ENCODE measurements at regions of chr12 and their contacts with region 1.

Region 1: GRCh38 chr12:112270673-112271072 is 111.6 kb downstream of the HECTD4 start:
- DNase-seq: no peak
- ATAC-seq: peak; percentile 52
- H3K4me3 ChIP-seq: no peak overlapping the region
- H3K27ac ChIP-seq: no peak overlapping the region
- H3K4me1 ChIP-seq: no peaks in the 10 kb centered on the region
- H3K27me3 ChIP-seq: no peaks in the 10 kb centered on the region

Region 2: GRCh38 chr12:112382232-112382796 is 111.6 kb after region 1 on chr12 and contains the start of gene HECTD4:
- intact Hi-C with region 1: loop called in 1 of 2 experiments (anchors 10 kb)
- DNase-seq: peak; percentile 97 to 99
- ATAC-seq: peak; percentile 98
- H3K4me3 ChIP-seq: peak within 1 kb of the TSS; percentile 77 to 95
- H3K27ac ChIP-seq: peak within 1 kb of the TSS in 1 of 2 donors; percentile 58
- H3K4me1 ChIP-seq: peaks cover 0 to 1% of the 10 kb centered on the region in 2 donors
- H3K27me3 ChIP-seq: no peaks in the 10 kb centered on the region
- total RNA-seq, gene HECTD4: 64.4 to 78.5 TPM